HCT116 (cell line): ENCODE measurements at regions of chrX and their contacts with region 1.

Region 1: GRCh38 chrX:9464435-9465371 is at the start of gene TBL1X:
- DNase-seq: no peak
- ATAC-seq: peak; percentile 68
- H3K4me3 ChIP-seq: peak within 1 kb of the TSS; percentile 52 to 63
- H3K27ac ChIP-seq: peak within 1 kb of the TSS; percentile 78
- H3K4me1 ChIP-seq: peaks cover 2 to 33% of the 10 kb centered on the region in 2 experiments; a peak in 3 of 4 replicates
- H3K27me3 ChIP-seq: no peaks in the 10 kb centered on the region
- CTCF ChIP-seq: no peak
- POLR2A ChIP-seq: no peak
- RAD21 ChIP-seq: no peak
- total RNA-seq, gene TBL1X: 37.8 TPM

Region 2: DNA sequence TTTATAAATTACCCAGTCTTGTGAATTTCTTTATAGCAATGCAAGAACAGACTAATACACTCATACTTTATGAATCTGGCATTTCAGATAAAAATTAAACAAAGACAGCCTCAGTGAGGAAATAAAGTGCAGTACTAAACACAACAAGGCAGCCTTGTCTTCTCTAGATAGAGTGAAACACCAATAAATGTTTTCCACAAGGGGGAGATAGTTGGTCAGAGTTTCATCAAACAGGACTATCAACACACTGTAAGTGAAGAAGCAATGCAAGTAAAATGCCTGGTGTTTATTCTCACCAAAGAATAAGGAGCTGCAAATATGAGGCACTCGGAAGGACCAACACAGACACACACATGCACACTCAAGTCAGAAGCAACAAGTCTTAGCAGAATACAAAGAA is 493.6 kb before region 1 on chrX:
- CTCF ChIA-PET with region 1: no interaction called
- POLR2A ChIA-PET with region 1: no interaction called
- RAD21 ChIA-PET with region 1: no interaction called
- intact Hi-C with region 1: loop called (anchors 2 kb)
- DNase-seq: peak; percentile 13
- ATAC-seq: peak; percentile 66; the same call in 1 of the 2 replicates
- H3K4me3 ChIP-seq: no peak overlapping the region
- H3K27ac ChIP-seq: no peak overlapping the region
- H3K4me1 ChIP-seq: no peaks in the 10 kb centered on the region
- H3K27me3 ChIP-seq: no peaks in the 10 kb centered on the region
- CTCF ChIP-seq: peak in 2 of 3 experiments; percentile 7 to 24; a peak in 1 of 6 replicates
- POLR2A ChIP-seq: no peak
- RAD21 ChIP-seq: peak; percentile 48

Region 3: DNA sequence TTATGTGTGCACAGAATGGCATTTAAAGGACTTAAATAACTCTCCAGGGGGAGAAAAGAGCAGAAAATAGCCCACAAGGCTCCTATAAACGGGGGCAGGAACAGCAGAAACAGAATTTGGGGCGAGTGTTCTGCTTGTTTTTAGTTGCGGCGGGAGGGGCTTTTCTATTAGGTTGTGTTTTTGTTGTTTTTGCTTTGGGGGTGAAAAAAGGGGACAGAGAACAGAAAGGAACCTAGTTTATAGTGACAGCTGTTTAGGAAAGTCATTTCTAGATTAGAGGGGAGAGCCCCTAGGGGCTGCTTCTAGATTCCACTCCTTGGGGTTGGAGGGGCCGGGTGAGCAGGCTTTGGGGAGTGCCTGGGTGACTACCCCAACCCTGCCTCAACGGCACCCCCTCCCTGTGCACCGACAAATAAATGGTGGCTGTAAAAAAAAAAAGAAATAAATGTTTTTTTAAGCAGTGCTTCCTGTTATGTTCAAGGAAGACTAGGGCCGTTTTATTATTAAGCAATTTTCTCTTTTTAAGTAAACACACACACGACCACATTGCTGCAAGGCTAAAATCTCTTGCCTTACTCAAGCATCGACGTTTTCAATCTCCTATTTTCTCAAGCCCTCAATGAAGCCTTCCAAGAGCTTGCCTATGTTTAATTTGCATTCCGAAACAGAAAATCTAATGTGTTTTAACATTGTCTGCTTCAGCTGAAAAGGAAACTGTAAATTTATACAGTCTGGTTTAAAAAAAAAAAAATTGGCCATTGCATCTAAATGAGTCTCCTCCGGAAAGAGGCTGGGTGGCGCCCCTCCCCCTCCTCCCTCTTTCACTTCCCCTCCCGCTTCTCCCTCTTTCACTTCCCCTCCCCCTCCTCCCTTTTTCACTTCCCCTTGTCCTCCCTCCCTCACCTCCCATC is 123.2 kb before region 1 on chrX:
- CTCF ChIA-PET with region 1: no interaction called
- POLR2A ChIA-PET with region 1: interaction called, 7 read pairs
- RAD21 ChIA-PET with region 1: interaction called, 4 read pairs
- intact Hi-C with region 1: loop called (anchors 1 kb)
- DNase-seq: no peak
- ATAC-seq: no peak
- H3K4me3 ChIP-seq: no peak overlapping the region
- H3K27ac ChIP-seq: no peak overlapping the region
- H3K4me1 ChIP-seq: peaks cover 8 to 11% of the 10 kb centered on the region in 2 experiments
- H3K27me3 ChIP-seq: no peaks in the 10 kb centered on the region
- CTCF ChIP-seq: no peak
- POLR2A ChIP-seq: no peak
- RAD21 ChIP-seq: no peak

Region 4: GRCh38 chrX:10052906-10053625 is 588.4 kb after region 1 on chrX:
- CTCF ChIA-PET with region 1: no interaction called
- POLR2A ChIA-PET with region 1: no interaction called
- RAD21 ChIA-PET with region 1: no interaction called
- intact Hi-C with region 1: no loop called
- DNase-seq: no peak
- ATAC-seq: no peak
- H3K4me3 ChIP-seq: no peak overlapping the region
- H3K27ac ChIP-seq: no peak overlapping the region
- H3K4me1 ChIP-seq: no peaks in the 10 kb centered on the region
- H3K27me3 ChIP-seq: no peaks in the 10 kb centered on the region
- CTCF ChIP-seq: no peak
- POLR2A ChIP-seq: no peak
- RAD21 ChIP-seq: no peak